ENCODE measurements at regions of chr16 and their contacts with region 1.

Region 1: GRCh38 chr16:55711959-55712876 is 56.4 kb downstream of the SLC6A2 start:
- DNase-seq: peak; percentile 66
- ATAC-seq: peak; percentile 68 to 77
- H3K4me3 ChIP-seq: no peak overlapping the region
- H3K27ac ChIP-seq: no peak overlapping the region
- H3K4me1 ChIP-seq: no peaks in the 10 kb centered on the region
- H3K27me3 ChIP-seq: peaks cover 8% of the 10 kb centered on the region
- CTCF ChIP-seq: peak; percentile 62

Region 2: DNA sequence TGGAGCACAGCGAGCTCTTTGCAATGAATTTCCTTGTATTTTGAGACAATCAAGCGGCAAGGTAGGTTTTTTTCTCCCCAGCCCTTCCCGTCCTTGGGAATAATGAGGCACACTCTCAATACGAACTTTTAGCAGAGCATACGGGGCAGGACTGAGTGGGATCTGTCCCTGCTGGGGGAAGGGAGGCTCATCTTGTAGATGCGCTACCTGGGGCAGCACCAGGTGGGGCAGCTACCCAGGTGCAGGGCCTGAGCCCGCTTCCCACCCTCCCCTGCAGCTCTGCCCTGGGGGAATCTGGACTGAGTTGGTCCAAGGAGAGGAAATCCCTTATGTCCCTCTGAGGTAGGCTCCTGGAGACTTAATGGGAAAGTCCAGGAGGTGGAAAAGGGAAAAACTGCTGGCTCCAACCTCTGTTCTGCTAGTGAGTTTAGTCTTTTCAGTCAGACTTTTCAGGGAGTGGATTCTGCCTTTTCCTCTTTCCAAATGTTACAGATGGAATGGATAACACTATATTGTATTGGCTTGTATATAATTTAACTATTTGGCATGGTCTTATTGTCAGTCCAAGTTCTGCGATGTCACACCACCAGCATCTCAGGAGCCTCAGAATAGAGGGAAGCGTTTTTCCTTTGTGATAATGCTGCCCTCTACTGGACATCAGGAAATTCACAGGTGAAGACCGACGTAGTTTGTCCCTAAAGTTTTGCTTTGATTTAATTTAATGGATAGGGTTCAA is 130.3 kb after region 1 on chr16:
- intact Hi-C with region 1: loop called (anchors 5 kb)
- DNase-seq: no peak
- ATAC-seq: peak; percentile 74 to 79
- H3K4me3 ChIP-seq: no peak overlapping the region
- H3K27ac ChIP-seq: no peak overlapping the region
- H3K4me1 ChIP-seq: no peaks in the 10 kb centered on the region
- H3K27me3 ChIP-seq: peaks cover 8% of the 10 kb centered on the region
- CTCF ChIP-seq: peak; percentile 68

Measured in lower lobe of right lung (tissue), 2 donors.